ENCODE measurements at regions of chr6 and their contacts with region 1.

Region 1: GRCh38 chr6:52419809-52420670 is at the start of gene EFHC1:
- DNase-seq: peak; percentile 98 to 99 (median 99)
- ATAC-seq: peak; percentile 96
- H3K4me3 ChIP-seq: peak within 1 kb of the TSS; percentile 65 to 78
- H3K27ac ChIP-seq: peak within 1 kb of the TSS; percentile 79 to 86
- H3K4me1 ChIP-seq: peaks cover 5 to 19% of the 10 kb centered on the region in 2 donors
- H3K27me3 ChIP-seq: no peaks in the 10 kb centered on the region
- CTCF ChIP-seq: no peak
- polyA plus RNA-seq, gene EFHC1: 49.4 to 73.0 (median 54.7) TPM

Region 2: DNA sequence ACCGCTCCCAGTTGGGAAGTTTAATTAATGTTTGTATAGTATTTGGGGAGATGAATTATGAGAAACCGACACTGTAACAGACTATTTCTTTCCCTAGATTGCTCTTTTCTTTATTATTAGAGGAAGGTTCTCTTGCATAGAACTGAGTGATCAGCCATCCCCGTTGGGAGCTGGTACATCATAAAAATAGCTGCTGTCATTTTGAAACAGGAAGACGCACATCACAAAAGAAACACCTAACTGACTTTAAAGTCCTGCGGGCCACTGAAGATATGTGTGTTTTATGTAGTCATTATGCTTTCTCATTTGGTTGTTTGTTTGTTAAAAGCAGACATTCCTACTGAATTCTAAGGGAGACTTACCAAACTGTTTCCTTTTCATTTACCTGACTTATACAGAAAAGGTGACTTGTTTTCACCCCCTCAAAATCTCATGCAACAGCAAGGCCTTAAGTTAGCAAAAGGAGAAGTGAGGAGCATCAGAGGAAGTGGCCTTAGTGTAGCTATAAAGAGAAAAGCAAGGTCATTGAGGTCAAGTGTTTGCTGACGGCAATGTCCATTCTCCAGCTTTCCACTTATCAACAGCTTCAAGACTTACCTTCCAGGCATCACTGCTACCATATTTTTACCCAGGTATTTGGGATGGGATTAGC is 423.6 kb before region 1 on chr6:
- intact Hi-C with region 1: no loop called
- DNase-seq: no peak
- ATAC-seq: no peak
- H3K4me3 ChIP-seq: no peak overlapping the region
- H3K27ac ChIP-seq: no peak overlapping the region
- H3K4me1 ChIP-seq: no peaks in the 10 kb centered on the region
- H3K27me3 ChIP-seq: peaks cover 0 to 8% of the 10 kb centered on the region in 2 donors
- CTCF ChIP-seq: no peak

Region 3: GRCh38 chr6:52598123-52598823 is 178.2 kb after region 1 on chr6:
- intact Hi-C with region 1: loop called in 1 of 2 experiments (anchors 10 kb)
- DNase-seq: peak in 2 of 4 donors; percentile 51 to 75
- ATAC-seq: peak; percentile 71
- H3K4me3 ChIP-seq: no peak overlapping the region
- H3K27ac ChIP-seq: no peak overlapping the region
- H3K4me1 ChIP-seq: peaks cover 11 to 32% of the 10 kb centered on the region in 2 donors
- H3K27me3 ChIP-seq: no peaks in the 10 kb centered on the region
- CTCF ChIP-seq: peak; percentile 58 to 62

Region 4: DNA sequence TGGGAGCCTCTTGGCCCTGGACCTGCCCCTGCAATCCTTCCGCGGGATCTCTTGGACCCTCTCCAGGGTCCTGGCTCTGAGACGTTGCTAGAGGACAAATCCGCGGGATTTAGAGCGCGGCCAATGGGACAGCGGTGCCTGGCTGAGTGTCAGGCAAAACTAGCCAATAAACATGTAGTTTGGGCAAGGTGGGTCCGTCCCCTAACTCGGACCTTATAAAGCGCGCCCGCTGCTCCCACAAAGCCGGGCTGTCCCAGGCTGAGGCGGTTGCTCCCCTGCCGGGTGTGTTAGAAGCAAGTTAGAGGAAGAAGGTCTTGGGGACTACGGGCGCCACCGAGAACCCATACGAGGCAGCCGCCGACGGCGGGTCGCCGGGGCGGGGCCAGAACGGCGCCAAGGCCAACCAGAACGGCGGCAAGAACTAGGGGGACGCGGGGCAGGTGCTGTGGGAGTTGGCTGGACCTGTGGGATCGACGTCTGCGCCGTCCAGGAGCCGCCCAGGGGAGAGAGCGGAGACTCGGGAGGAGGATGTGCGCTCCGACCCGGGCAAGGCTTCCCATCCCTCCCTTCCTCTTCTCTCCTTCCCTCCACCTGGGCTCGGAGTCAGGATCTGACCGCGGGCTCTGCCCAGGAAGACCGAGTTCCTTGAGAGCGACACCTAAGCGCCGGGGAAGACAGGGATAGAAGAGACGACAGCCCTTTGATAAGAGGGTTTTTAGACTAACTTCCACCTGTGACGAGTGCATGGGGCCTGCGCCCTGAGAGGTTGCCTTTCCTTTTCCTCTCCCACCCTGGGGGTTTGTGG is 244.3 kb after region 1 on chr6:
- intact Hi-C with region 1: loop called in 1 of 2 experiments (anchors 5 kb)
- DNase-seq: peak; percentile 90 to 97 (median 92)
- ATAC-seq: peak; percentile 99
- H3K4me3 ChIP-seq: peak overlapping the region; percentile 55 to 76
- H3K27ac ChIP-seq: peak overlapping the region; percentile 49 to 66
- H3K4me1 ChIP-seq: peaks cover 0 to 21% of the 10 kb centered on the region in 2 donors
- H3K27me3 ChIP-seq: peaks cover 0 to 10% of the 10 kb centered on the region in 2 donors
- CTCF ChIP-seq: no peak